Calu3 (cell line): ENCODE measurements at regions of chr17 and their contacts with region 1.

Region 1: DNA sequence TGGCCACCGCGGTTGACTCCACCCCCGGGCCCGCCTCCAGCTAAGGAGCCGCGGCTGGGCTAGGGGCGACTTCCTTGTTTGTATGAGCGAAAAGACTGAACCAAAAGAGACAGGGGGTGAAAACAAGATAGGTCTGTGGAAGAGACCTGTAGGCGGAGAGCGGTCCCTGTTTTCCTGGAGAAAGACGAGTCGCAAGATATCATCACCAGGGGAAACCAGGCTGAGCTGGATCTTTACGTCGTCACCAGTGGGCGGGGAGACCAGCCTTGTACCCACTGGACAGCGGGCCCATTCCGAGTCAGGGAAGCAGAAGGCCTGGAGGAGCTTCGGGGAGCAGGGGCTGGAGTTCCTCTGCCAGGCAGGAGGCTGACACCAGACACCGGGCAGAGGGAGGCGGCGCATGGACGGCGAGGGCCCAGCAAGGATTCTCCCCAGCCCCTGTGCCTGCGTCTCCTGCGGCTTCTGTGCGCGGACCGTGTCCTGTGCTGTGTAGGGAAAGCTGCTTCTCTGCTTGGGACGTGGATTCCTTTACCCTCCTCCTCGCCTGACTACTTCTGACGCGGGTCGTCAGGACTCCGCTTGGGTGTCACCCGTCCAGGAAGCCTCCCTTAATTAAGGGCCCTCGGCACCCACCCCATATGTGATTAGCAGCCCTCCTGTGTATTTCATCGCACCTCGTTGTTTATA is 10.3 kb upstream of the ARL4D start:
- DNase-seq: peak; percentile 97
- H3K4me3 Mint-ChIP-seq: peak overlapping the region; percentile 70
- H3K27ac Mint-ChIP-seq: peak overlapping the region; percentile 69
- H3K4me1 Mint-ChIP-seq: peaks cover 9% of the 10 kb centered on the region
- H3K27me3 Mint-ChIP-seq: no peaks in the 10 kb centered on the region
- CTCF ChIP-seq: no peak

Region 2: DNA sequence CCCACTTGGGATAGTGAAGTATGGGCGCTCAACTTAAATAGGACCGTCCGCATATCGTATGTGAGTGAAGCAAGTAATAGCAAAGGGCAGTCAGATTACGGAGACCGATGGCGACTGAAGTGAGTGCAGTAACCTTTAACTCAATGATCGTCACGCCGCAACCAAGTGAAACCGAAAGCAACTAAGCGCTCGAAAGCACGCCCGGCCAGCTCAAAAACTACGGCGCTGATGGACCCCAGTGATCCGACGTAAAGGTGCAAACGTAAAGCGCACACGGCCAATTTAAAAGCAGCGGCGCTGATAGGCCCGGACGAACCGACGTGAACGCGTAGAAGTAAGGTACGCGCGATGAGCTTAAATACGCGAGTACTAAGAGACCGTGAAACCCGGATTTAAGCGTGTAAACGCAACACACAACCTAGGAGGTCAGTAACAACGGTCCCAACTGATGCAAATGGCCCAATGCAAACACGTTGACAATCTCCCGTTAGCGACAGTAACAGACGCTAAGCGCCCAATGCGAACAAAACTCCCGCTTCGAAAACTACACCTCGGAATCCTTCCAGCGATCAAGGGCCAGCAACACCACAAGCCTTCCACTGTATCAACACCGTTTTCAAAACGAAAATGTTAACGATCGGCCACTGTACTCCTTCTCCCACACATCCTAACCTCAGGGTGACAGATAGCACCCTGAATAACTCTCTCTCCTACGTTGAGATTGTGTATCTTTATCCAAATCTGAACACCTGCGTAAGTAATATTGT is 27.6 kb before region 1 on chr17:
- CTCF ChIA-PET with region 1: interaction called, 16 read pairs
- intact Hi-C with region 1: loop called (anchors 2 kb)
- DNase-seq: peak; percentile 95
- H3K4me3 Mint-ChIP-seq: peak overlapping the region; percentile 72
- H3K27ac Mint-ChIP-seq: peak overlapping the region; percentile 100
- H3K4me1 Mint-ChIP-seq: peaks cover 42% of the 10 kb centered on the region
- H3K27me3 Mint-ChIP-seq: peaks cover 13% of the 10 kb centered on the region
- CTCF ChIP-seq: no peak

Region 3: GRCh38 chr17:43367737-43368242 is 20.7 kb before region 1 on chr17:
- CTCF ChIA-PET with region 1: interaction called, 25 read pairs
- intact Hi-C with region 1: loop called (anchors 1 kb)
- DNase-seq: peak; percentile 60
- H3K4me3 Mint-ChIP-seq: peak overlapping the region; percentile 85
- H3K27ac Mint-ChIP-seq: peak overlapping the region; percentile 100
- H3K4me1 Mint-ChIP-seq: peaks cover 37% of the 10 kb centered on the region
- H3K27me3 Mint-ChIP-seq: peaks cover 9% of the 10 kb centered on the region
- CTCF ChIP-seq: no peak